Sigmoid colon (tissue), 7 donors: ENCODE measurements at regions of chr10 and their contacts with region 1.

Region 1: DNA sequence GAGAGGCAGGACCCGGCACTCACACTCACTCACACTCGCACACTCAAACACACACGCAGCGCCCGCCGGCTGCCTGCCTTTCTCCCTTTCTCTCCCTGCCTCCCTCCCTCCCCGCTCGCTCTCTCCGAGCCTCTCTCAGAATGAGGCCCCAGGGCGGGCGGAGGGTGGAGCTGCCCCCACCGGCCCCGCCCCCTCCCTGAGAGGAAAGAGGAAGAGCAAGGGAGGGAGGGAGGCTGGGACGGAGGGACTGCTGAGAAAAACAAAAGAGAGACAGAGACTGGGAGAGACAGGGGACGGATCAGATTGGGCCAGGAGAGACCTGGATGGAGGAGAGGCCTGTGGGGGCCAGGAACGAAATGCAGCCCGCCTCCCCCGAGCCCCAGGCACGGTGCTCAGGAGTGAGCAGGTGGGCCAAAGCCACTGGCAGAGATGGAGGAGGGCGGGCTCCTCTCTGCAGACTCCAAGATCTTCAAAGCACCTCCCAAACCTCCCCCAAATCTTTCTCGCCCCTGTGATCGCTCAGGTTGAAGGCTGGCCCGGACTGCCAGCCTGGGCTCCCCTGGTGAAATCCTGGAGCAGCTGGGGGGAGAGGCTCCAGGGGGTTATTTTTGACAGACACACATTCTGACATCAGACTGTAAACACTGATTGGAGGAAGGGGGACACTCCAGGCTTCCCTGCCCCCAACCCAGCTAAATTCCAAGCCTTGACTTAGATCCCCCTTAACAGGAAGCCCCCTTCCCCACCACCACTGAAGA is 5.1 kb downstream of the LDB1 start:
- DNase-seq: peak; percentile 94
- H3K4me3 ChIP-seq: peak overlapping the region; percentile 59 to 87 (median 74)
- H3K27ac ChIP-seq: peak overlapping the region; percentile 94 to 100 (median 100)
- H3K4me1 ChIP-seq: peaks cover 0 to 73% (median 64%) of the 10 kb centered on the region in 4 donors
- H3K27me3 ChIP-seq: no peaks in the 10 kb centered on the region
- CTCF ChIP-seq: no peak
- EP300 ChIP-seq: no peak
- POLR2A ChIP-seq: peak; percentile 13 to 61

Region 2: DNA sequence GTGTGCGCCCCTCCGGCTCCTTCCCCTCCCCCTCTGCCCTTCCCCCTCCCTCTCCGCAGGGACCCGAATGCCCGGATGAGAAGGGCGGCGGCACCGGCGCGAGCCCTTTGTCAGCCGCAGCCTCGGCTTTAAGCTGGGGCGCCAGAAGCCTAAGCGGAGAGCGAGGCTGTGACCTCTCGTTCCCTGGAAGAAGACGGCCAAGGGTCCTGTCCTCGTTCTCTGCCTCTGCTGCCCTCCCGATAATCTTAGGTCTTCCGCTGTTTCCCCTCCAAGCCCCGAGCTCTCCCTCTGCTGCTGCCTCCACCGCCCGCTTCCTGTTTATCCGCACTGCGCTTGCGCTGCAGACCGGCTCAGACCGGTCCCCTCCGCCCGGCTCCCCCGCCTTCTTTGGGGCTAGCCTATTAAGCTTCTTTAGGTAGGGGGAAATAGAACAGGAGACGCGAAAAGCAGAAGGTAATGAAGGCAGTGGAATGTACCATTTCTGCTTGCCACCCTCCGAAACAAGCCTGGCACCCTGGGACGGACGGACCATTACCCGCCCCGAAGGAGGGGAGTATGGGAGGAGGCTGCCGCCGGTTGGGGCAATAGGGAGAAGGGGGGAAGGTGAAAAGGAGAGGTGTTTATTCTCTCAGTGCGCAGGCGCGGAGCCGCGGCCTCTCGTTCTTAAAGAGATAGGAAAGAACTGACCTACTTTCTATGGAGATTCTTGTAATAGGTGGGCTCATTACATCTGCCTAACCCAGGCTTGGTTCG is 296.7 kb before region 1 on chr10 and contains the start of gene OGA:
- intact Hi-C with region 1: loop called (anchors 5 kb)
- DNase-seq: peak; percentile 100
- H3K4me3 ChIP-seq: peak within 1 kb of the TSS; percentile 89 to 100 (median 97)
- H3K27ac ChIP-seq: peak within 1 kb of the TSS; percentile 97 to 99 (median 98)
- H3K4me1 ChIP-seq: peaks cover 0 to 39% (median 35%) of the 10 kb centered on the region in 4 donors
- H3K27me3 ChIP-seq: no peaks in the 10 kb centered on the region
- CTCF ChIP-seq: no peak
- EP300 ChIP-seq: peak in 2 of 4 donors; percentile 13 to 29
- POLR2A ChIP-seq: peak; percentile 99 to 100
- total RNA-seq, gene OGA: 124 to 143 (median 140) TPM

Region 3: GRCh38 chr10:102024799-102025198 is 90.2 kb before region 1 on chr10:
- intact Hi-C with region 1: no loop called
- DNase-seq: no peak
- H3K4me3 ChIP-seq: no peak overlapping the region
- H3K27ac ChIP-seq: no peak overlapping the region
- H3K4me1 ChIP-seq: no peaks in the 10 kb centered on the region
- H3K27me3 ChIP-seq: no peaks in the 10 kb centered on the region
- CTCF ChIP-seq: no peak
- EP300 ChIP-seq: no peak
- POLR2A ChIP-seq: no peak

Region 4: DNA sequence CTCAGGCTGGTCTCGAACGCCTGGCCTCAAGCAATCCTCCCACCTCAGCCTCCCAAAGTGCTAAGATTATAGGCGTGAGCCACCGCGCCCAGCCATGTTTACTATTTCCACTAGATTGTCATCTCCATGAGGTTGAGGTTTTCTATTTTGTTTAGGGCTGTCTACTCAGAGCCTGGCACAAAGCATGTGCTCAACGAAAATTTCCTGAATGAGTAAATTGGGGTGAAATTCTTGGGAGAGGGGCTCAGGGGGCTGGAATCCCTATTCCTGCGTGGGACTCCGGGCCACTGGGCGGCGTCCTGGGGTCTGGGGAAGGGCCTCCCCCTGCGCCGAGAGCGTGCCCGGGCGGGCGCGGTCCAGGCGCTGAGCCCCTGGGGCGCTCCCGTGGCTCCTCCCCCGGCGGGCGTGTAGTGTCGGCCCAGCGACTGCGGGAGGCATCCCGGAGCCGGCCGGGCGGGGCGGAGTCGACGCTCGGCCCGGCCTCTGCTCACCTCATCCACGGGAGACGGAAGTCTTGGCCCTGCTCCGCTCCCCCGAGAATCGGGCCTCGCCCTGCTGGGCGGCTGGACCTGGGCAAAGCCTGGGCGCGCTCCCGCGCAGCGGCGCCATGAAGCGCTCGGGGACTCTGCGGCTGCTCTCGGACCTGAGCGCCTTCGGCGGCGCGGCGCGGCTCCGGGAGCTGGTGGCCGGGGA is 50.0 kb before region 1 on chr10 and contains the start of gene HPS6:
- intact Hi-C with region 1: loop called (anchors 2 kb)
- DNase-seq: peak; percentile 95
- H3K4me3 ChIP-seq: peak within 1 kb of the TSS; percentile 61 to 87 (median 84)
- H3K27ac ChIP-seq: peak within 1 kb of the TSS; percentile 90 to 94 (median 93)
- H3K4me1 ChIP-seq: peaks cover 0 to 44% (median 33%) of the 10 kb centered on the region in 4 donors
- H3K27me3 ChIP-seq: no peaks in the 10 kb centered on the region
- CTCF ChIP-seq: no peak
- EP300 ChIP-seq: no peak
- POLR2A ChIP-seq: peak; percentile 48 to 50
- total RNA-seq, gene HPS6: 12.5 to 18.9 (median 17.2) TPM

Region 5: DNA sequence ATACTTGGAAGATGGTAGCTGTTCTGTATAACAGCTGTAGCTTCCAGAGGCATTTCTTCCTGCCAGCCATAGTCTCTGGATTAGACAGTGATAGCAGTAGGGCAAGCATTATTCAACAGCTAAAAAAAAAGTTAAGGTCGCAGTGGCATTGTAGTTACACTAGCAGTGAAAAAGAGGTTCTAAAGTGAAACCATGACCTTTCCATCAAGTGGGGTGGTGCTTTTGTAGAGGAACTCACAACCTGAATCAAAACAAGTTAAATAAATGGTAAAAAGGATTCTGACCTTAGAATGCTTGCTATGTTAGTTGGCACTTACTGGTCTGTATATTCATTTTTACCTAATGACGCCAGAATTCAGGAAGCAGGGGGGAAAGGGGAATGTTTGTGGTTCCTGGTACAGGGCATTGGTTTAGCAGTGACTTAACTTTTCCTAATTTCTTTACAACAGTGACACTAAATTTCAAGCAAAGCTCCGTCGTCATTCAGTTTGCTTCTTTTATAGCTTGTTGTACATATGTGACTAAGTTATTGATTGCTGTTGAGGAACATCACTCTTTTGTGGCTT is 185.3 kb after region 1 on chr10:
- intact Hi-C with region 1: no loop called
- DNase-seq: no peak
- H3K4me3 ChIP-seq: no peak overlapping the region
- H3K27ac ChIP-seq: no peak overlapping the region
- H3K4me1 ChIP-seq: peaks cover 0 to 15% (median 12%) of the 10 kb centered on the region in 4 donors
- H3K27me3 ChIP-seq: no peaks in the 10 kb centered on the region
- CTCF ChIP-seq: no peak
- EP300 ChIP-seq: no peak
- POLR2A ChIP-seq: no peak

Region 6: GRCh38 chr10:102629661-102630614 is 514.9 kb after region 1 on chr10:
- intact Hi-C with region 1: loop called (anchors 5 kb)
- DNase-seq: peak; percentile 58
- H3K4me3 ChIP-seq: no peak overlapping the region
- H3K27ac ChIP-seq: peak overlapping the region; percentile 81 to 94 (median 88)
- H3K4me1 ChIP-seq: peaks cover 0 to 100% (median 98%) of the 10 kb centered on the region in 4 donors
- H3K27me3 ChIP-seq: no peaks in the 10 kb centered on the region
- CTCF ChIP-seq: no peak
- EP300 ChIP-seq: no peak
- POLR2A ChIP-seq: no peak